Activated CD8-positive, alpha-beta memory T cell treated with anti-CD3 and anti-CD28 coated beads, Interleukin-2, amount 10 ng/mL, durations not matched to agents 7 days and 5 days (primary cell): ENCODE measurements at regions of chr1 and their contacts with region 1.

Region 1: DNA sequence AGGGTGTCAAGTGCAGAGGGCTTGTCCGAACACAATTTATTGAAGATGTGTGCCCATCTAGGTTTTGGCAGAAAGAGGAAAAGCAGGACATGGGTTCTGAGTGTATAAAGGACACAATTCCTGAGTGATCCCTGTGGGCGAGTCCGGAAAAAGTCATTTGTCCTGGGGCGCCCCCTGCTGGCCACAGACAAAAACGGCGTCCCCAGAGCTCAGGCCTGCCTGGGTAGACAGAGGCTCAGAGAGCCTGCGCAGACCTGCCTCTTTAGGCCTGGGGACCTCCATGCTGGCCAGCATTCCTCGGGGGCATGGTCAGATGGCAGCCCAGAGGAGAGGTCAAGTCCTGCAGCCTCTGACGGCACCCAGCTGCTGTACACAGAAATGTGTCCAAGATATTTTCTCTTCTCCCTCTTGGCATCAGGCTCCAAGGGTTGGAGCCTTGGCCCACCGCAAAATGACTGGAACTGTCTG is 65.5 kb upstream of the LRP8 start:
- DNase-seq: peak; percentile 70
- ATAC-seq: peak; percentile 78
- H3K4me3 Mint-ChIP-seq: no peak overlapping the region
- H3K27ac Mint-ChIP-seq: peak overlapping the region; percentile 26
- H3K4me1 Mint-ChIP-seq: peaks cover 3% of the 10 kb centered on the region
- H3K27me3 Mint-ChIP-seq: peaks cover 2% of the 10 kb centered on the region

Region 2: DNA sequence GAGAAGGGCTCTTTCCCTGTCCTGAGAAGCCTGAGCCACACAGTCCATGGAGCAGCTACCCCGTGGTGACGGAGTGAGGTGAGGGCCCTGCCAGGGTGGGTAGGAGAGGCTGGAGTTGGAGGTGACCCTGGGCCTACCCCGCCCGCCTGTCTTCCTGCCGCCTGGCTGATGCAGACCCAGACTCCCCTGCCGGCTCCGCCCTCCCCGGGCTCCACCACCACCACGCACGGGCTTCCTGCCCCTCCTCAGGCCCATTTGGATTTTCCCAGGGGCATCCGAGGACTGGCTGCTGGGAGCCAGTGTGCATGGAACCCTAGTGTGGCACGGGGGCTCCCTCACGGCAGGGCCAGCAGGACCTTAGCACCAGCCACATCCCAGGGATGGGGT is 298.8 kb before region 1 on chr1:
- CTCF ChIA-PET with region 1: no interaction called
- DNase-seq: no peak
- ATAC-seq: no peak
- H3K4me3 Mint-ChIP-seq: no peak overlapping the region
- H3K27ac Mint-ChIP-seq: no peak overlapping the region
- H3K4me1 Mint-ChIP-seq: no peaks in the 10 kb centered on the region
- H3K27me3 Mint-ChIP-seq: no peaks in the 10 kb centered on the region

Region 3: DNA sequence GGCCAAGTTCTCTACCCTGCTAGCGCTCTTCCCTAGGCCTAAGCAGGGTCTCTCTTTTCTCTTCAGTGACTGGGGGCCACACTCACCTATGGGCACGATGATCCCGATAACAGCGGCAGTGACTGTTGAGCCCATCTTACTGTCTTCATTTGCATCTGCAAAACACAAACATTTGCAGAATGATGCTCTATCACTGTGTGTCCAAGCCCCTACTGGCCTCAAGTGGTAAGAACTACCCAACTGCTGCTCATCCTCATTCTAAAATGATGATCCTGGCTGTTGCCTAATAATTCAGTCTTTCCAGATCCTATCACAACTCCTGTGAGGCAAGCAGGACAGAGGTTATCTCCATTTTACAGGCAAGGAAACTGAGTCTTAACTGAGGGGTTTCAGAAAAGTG is 138.3 kb before region 1 on chr1:
- CTCF ChIA-PET with region 1: interaction called, 10 read pairs
- DNase-seq: no peak
- ATAC-seq: no peak
- H3K4me3 Mint-ChIP-seq: no peak overlapping the region
- H3K27ac Mint-ChIP-seq: no peak overlapping the region
- H3K4me1 Mint-ChIP-seq: no peaks in the 10 kb centered on the region
- H3K27me3 Mint-ChIP-seq: no peaks in the 10 kb centered on the region

Region 4: DNA sequence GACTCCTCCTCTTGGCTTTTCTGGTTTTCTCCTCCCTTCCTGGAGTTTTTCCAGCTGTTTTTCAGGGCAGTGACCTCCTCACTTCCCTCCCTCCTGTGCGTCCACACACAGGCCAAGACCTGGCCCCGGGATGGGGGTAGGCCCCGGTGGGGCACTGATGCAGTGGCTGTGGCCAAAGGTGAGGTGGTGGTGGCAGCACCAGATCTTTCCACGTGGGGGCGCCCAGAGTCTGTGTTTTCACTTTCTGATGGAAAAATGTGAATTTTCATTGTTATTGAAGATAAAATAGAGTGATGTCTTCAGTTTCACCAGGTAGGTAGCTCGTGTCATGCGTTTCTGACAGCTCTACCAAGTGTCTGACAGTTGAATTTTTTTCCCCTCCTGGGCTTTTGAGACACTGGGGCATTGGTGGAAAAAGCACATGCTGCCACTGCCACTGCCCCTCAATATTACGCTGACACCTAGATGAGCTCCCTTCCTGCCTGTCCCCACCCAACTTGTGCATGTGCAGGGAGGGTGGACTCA is 115.1 kb before region 1 on chr1:
- CTCF ChIA-PET with region 1: interaction called, 137 read pairs
- DNase-seq: peak; percentile 76
- ATAC-seq: peak; percentile 72
- H3K4me3 Mint-ChIP-seq: no peak overlapping the region
- H3K27ac Mint-ChIP-seq: peak overlapping the region; percentile 32
- H3K4me1 Mint-ChIP-seq: no peaks in the 10 kb centered on the region
- H3K27me3 Mint-ChIP-seq: no peaks in the 10 kb centered on the region

Region 5: GRCh38 chr1:53292690-53293089 is 100.7 kb before region 1 on chr1:
- CTCF ChIA-PET with region 1: interaction called, 12 read pairs
- DNase-seq: no peak
- ATAC-seq: no peak
- H3K4me3 Mint-ChIP-seq: no peak overlapping the region
- H3K27ac Mint-ChIP-seq: peak overlapping the region; percentile 71
- H3K4me1 Mint-ChIP-seq: peaks cover 34% of the 10 kb centered on the region
- H3K27me3 Mint-ChIP-seq: no peaks in the 10 kb centered on the region

Region 6: DNA sequence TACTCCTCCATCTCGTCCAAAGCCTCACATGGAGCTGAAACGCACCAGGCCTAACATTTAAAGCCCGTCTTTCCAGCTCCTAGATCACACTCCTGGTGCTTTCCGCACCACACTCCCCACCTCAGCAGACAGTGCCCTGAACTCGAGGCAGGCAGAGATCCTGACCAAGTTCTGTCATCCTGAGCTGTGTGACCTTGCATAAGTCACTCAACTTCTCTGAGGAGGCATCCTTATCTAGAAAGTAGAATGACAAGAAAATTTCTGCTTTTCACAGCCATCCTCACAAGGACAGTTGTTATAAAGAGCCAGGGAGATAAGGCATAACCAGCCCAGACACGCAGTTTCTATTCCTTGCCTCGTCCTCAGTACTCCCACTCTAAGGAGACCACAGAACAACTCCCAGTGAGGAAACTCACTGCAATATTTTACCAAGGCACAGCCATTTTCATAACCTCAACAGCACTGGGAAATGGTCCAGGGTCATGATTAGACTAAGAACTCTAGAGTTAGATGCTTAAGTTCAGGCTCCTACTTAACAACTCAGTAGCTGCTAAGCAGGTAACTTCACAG is 68.5 kb before region 1 on chr1:
- CTCF ChIA-PET with region 1: interaction called, 10 read pairs
- DNase-seq: no peak
- ATAC-seq: no peak
- H3K4me3 Mint-ChIP-seq: peak overlapping the region; percentile 95
- H3K27ac Mint-ChIP-seq: peak overlapping the region; percentile 91
- H3K4me1 Mint-ChIP-seq: peaks cover 43% of the 10 kb centered on the region
- H3K27me3 Mint-ChIP-seq: no peaks in the 10 kb centered on the region

Region 7: DNA sequence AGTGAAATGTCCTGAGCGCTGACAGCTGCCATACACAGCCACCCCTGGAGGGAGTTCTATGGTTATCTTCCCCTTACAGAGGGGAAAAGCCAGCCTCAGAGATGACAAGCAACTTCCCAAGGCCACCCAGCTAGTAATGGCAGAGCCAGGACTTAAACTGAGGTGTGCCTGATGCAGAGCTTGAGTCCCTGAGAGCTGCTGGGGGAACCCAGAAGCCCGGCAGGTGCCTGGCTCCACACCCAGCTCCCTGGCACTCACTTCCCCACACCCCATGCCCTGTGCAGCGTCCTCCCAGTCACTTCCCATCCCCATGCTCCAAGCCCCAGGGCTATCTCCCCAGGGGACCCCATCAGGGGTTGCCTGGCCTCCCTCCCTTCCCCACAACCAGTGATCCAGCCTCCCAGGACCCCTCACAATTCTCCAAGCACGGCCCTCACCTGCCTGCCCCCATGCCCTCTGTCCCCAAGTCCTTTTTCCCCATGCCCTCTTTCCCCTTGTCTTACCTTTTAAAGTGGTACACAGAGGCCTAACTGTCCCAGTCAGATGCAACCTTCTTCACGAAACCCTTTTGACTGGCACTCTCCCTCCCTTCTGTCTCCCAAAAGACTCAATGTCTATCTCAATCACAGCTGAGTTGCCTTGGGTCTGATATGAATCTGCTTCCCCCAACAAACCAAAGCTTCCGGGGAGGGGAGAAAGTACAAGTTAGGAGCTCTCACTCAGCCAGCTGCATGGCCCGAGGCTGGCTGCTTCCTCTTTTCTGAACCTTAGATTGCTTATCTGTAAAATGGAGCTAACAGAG is 25.7 kb before region 1 on chr1:
- CTCF ChIA-PET with region 1: interaction called, 11 read pairs
- DNase-seq: peak; percentile 76
- ATAC-seq: peak; percentile 93
- H3K4me3 Mint-ChIP-seq: peak overlapping the region; percentile 57
- H3K27ac Mint-ChIP-seq: peak overlapping the region; percentile 81
- H3K4me1 Mint-ChIP-seq: peaks cover 14% of the 10 kb centered on the region
- H3K27me3 Mint-ChIP-seq: no peaks in the 10 kb centered on the region

Region 8: DNA sequence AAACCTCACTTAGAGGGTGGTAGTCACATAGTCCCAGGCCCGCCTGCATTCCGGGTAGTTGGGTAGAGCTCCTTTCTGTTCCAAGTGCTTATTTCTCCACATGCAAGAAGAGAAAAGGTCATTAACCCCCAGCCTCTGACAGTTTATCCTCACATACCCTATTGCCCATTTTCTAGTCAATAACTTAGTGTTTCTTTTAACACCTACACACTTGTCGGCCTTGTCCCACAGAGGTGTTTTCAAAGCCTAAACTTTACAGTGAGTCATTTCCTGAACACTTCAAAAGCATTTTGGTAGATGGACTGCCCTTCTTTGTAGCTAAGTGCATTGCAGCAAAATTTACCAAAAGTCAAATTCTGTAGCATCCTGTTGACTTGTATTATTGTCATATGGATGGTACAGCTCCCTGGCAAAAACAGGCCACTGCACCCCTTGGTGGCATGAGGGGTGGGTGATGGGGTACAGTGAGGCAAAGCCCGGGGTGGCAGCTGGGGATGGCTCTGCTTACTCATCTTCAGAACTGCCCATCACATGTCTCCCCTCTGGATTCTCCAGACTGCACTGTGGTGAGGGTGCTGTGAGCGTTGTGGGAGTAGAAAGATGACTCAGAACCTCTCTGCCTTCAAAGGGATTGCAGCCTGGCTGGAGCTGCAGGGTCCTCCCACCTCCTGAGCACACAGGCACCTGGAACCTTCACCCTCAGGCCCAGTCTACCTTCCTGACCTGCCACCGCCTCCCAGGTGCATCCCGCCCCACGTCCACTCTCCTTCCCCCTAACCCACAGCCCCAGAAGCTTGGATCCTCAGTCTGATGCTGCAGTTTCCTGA is 20.0 kb after region 1 on chr1:
- CTCF ChIA-PET with region 1: interaction called, 20 read pairs
- DNase-seq: peak; percentile 86
- ATAC-seq: peak; percentile 89
- H3K4me3 Mint-ChIP-seq: peak overlapping the region; percentile 21
- H3K27ac Mint-ChIP-seq: peak overlapping the region; percentile 98
- H3K4me1 Mint-ChIP-seq: peaks cover 61% of the 10 kb centered on the region
- H3K27me3 Mint-ChIP-seq: no peaks in the 10 kb centered on the region